ENCODE measurements at regions of chr10 and their contacts with region 1.

Region 1: DNA sequence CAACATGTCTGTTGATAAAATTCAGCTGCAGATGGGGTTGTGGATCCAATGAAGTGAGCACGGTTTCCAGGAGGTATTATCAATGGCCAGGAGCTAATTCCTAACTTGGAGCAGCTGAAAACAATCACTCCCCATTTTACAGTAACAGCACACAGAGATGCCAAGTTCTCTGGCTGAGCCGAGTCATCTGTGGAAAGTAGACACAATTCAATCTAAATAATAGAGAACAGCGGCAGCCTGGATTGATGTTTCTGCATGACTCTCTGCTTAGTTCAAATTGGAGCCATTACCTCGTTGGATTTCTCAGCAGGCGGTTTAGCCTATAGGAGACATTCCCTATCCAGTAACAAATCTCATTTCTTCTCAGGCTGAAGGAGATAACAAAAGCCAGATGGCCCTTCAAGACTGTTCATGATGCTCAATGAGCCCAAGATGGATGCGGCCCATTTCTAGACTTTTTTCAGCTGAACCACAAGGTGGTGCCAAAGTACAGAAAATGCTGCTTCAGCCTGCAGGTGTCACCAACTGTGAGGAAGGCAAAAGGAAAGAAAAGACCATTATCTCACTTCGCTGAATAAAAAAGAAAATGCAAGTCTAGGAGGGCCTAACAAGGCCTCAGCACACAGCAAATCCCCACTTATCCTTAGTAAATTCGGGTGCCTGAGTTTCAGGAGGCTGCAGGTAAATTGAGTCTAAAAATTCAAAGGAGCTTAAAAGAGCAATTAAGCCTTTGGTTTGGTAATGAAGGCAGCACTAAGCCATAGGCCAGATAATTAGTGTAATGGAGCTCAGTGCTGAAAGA is 83.7 kb downstream of the SLC16A9 start:
- DNase-seq: peak; percentile 76
- H3K4me3 ChIP-seq: no peak overlapping the region
- H3K27ac ChIP-seq: peak overlapping the region in 3 of 4 donors; percentile 29 to 68 (median 54)
- H3K4me1 ChIP-seq: peaks cover 0 to 6% (median 2%) of the 10 kb centered on the region in 4 donors
- H3K27me3 ChIP-seq: no peaks in the 10 kb centered on the region
- CTCF ChIP-seq: peak; percentile 79 to 94 (median 89)
- EP300 ChIP-seq: no peak
- POLR2A ChIP-seq: no peak

Region 2: DNA sequence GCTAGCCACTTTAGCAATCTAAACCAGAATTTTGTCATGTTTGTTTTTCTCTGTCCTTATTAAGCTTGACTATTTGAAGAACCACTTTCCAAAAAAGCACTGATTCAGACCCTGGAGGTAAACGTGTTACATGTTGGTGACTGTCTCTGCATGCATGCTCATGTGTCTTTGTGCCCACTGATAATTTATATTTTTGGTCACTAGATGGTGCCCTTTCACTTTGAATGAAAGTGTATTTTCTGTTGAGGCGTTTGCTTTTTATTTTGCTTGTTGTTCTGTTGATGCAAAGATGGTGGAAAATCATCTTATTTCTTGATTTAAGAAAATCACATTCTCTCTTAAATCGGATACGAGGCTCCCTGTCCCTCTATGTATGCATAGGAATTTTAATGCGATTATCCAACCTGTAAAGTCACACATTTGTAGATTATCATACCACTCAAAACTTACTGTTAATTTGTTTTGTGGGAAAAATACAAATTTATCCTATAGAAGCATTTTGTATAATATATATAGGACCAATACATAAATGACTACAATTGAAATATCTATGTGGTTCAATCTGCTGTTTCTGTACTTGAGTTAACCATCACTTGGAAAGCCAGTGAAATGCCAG is 843.9 kb before region 1 on chr10:
- intact Hi-C with region 1: loop called (anchors 5 kb)
- DNase-seq: no peak
- H3K4me3 ChIP-seq: no peak overlapping the region
- H3K27ac ChIP-seq: peak overlapping the region in 1 of 4 donors; percentile 39
- H3K4me1 ChIP-seq: peaks cover 0 to 16% (median 3%) of the 10 kb centered on the region in 4 donors
- H3K27me3 ChIP-seq: no peaks in the 10 kb centered on the region
- CTCF ChIP-seq: peak in 3 of 4 experiments; percentile 37 to 64 (median 48)
- EP300 ChIP-seq: no peak
- POLR2A ChIP-seq: no peak

Region 3: GRCh38 chr10:59240582-59241183 is 385.2 kb before region 1 on chr10:
- intact Hi-C with region 1: loop called (anchors 2 kb)
- DNase-seq: no peak
- H3K4me3 ChIP-seq: no peak overlapping the region
- H3K27ac ChIP-seq: no peak overlapping the region
- H3K4me1 ChIP-seq: peaks cover 0 to 9% (median 0%) of the 10 kb centered on the region in 4 donors
- H3K27me3 ChIP-seq: no peaks in the 10 kb centered on the region
- CTCF ChIP-seq: peak; percentile 61 to 72 (median 66)
- EP300 ChIP-seq: no peak
- POLR2A ChIP-seq: no peak

Region 4: DNA sequence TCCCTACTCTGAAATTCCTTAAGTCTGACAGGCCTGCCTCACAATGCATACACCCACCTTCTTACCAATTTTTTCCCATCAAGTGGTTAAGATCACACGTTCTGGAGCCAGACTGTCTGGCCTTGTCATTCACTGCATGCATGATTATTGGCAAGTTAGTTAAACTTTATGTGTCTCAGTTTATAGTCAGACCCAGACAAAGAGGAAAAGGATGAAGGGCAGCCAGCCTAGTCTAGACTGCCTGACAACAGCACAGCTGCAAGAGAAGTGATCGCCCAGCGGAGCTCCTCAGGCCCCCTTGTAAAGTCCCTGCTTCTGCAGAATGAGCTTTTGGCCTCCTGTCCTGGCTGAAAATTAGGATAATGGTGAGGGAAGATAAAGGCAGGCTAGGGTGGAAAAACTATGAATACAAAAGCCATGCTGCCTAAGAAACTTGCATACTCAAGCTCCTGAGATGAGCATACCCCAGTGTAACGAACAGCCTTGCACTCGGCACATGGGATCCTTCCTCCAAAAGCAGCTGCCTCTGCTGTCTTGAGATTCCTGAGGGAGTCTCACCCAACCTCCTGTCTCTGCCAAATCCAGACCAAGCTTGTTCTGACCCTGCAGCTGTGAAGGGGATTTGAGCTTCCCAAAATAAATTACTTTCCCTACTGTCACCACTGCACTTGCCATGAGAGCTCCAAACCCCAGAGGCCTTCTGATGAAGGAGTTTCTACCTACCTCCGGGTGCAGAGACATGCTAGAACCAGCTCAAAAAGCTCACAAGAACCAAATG is 154.0 kb after region 1 on chr10:
- intact Hi-C with region 1: no loop called
- DNase-seq: no peak
- H3K4me3 ChIP-seq: no peak overlapping the region
- H3K27ac ChIP-seq: no peak overlapping the region
- H3K4me1 ChIP-seq: no peaks in the 10 kb centered on the region
- H3K27me3 ChIP-seq: no peaks in the 10 kb centered on the region
- CTCF ChIP-seq: no peak
- EP300 ChIP-seq: no peak
- POLR2A ChIP-seq: no peak

Region 5: GRCh38 chr10:59830601-59831259 is 204.8 kb after region 1 on chr10:
- intact Hi-C with region 1: loop called (anchors 5 kb)
- DNase-seq: no peak
- H3K4me3 ChIP-seq: no peak overlapping the region
- H3K27ac ChIP-seq: no peak overlapping the region
- H3K4me1 ChIP-seq: peaks cover 0 to 32% (median 30%) of the 10 kb centered on the region in 4 donors
- H3K27me3 ChIP-seq: no peaks in the 10 kb centered on the region
- CTCF ChIP-seq: peak; percentile 19 to 78 (median 56)
- EP300 ChIP-seq: no peak
- POLR2A ChIP-seq: no peak

Region 6: DNA sequence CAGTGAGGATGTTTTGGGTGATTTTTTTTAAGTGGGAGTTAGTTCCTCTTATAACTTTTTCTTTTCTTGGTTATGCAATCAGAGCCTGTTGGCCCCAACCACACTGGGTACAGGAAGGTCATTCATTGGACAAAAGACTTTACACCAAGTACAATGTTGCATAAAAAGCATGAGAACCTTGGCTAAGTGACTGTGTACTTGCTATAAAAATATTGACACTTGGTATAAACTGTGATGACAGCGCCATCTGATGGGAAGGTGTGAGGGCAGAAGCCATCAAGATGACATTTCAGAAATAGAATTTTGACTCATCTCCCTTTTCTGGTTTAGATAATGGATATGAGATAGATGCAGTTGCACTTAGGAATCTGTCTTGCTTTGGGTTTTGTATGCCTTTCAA is 406.8 kb after region 1 on chr10:
- intact Hi-C with region 1: loop called (anchors 5 kb)
- DNase-seq: no peak
- H3K4me3 ChIP-seq: no peak overlapping the region
- H3K27ac ChIP-seq: peak overlapping the region in 1 of 4 donors; percentile 16
- H3K4me1 ChIP-seq: peaks cover 0 to 16% (median 9%) of the 10 kb centered on the region in 4 donors
- H3K27me3 ChIP-seq: no peaks in the 10 kb centered on the region
- CTCF ChIP-seq: peak in 1 of 4 experiments; percentile 39
- EP300 ChIP-seq: no peak
- POLR2A ChIP-seq: no peak

Region 7: DNA sequence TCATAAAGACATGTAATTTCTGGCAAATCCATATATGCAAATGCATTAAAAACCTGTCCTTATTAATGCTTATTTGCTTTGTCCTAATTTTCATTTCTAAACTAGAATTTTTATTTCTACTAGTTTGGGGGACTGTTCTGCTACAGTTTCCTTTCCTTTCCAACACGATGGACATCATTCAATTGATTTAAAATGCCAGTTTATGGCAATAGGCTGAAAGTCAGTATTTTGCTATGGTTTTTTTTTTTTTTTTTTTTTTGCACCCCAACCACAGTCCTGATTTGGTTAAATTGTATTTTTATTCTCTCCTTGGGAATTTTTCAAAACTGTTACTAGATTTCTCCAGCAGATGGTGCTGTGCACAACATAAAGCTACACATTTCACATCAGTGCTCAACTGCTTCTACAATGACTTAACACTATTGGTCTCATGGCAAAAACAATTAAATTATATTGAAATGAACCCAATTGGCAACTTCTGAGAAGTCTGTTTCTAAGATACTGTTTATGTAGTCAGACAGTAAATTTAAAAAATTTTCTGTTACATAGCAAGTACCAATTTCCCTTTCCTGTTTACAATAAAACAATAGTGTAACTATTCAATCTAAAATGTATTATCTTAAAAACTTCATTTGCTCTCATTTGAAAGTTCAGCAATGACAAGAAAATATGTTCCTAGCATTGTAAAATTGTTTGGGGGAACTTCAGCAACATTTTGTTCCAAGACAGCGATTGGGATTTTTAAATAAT is 474.3 kb after region 1 on chr10:
- intact Hi-C with region 1: loop called (anchors 5 kb)
- DNase-seq: no peak
- H3K4me3 ChIP-seq: no peak overlapping the region
- H3K27ac ChIP-seq: no peak overlapping the region
- H3K4me1 ChIP-seq: peaks cover 0 to 9% (median 3%) of the 10 kb centered on the region in 4 donors
- H3K27me3 ChIP-seq: no peaks in the 10 kb centered on the region
- CTCF ChIP-seq: peak; percentile 16 to 44 (median 42)
- EP300 ChIP-seq: no peak
- POLR2A ChIP-seq: no peak

Region 8: GRCh38 chr10:60434418-60435046 is 808.6 kb after region 1 on chr10:
- intact Hi-C with region 1: loop called (anchors 5 kb)
- DNase-seq: no peak
- H3K4me3 ChIP-seq: no peak overlapping the region
- H3K27ac ChIP-seq: no peak overlapping the region
- H3K4me1 ChIP-seq: peaks cover 0 to 44% (median 28%) of the 10 kb centered on the region in 4 donors
- H3K27me3 ChIP-seq: no peaks in the 10 kb centered on the region
- CTCF ChIP-seq: peak; percentile 58 to 71 (median 66)
- EP300 ChIP-seq: no peak
- POLR2A ChIP-seq: no peak